ENCODE measurements at regions of chr15 and their contacts with region 1.

Region 1: GRCh38 chr15:41180206-41180789 is 50.3 kb downstream of the EXD1 start:
- DNase-seq: no peak

Region 2: GRCh38 chr15:40906091-40906990 is 274.0 kb before region 1 on chr15:
- intact Hi-C with region 1: loop called (anchors 10 kb)
- DNase-seq: peak in 40 of 42 donors; percentile 27 to 81 (median 60)

Region 3: DNA sequence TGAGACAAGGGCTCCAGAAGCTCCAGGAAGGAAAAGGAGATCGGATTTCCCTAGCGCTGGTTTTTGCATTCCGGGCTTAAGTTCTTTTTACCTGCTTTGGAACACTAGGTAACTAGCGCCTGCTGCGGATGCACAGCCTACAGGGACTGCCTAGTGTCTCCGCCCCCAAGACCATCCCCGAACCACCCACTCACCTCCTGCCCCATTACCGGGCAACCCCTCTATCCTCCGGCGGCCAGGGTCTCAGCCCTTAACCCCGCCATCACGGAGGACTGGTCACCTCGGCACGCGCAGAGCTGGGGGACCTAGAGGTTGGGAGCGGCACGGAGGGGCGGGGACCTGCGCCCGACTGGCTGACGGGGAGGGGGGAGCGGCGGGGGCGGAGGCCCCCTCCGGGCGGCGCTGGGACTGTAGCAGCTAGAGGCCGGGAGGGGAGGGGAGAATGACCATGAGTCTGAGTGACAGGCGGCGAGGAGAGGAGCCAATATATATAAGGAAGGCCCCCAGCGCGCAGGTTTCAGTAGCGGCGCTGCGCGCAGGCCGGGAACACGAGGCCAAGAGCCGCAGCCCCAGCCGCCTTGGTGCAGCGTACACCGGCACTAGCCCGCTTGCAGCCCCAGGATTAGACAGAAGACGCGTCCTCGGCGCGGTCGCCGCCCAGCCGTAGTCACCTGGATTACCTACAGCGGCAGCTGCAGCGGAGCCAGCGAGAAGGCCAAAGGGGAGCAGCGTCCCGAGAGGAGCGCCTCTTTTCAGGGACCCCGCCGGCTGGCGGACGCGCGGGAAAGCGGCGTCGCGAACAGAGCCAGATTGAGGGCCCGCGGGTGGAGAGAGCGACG is 251.3 kb before region 1 on chr15 and contains the start of gene DLL4:
- intact Hi-C with region 1: no loop called
- DNase-seq: peak in 8 of 42 donors; percentile 20 to 41 (median 27)

Region 4: GRCh38 chr15:41230650-41231533 is 50.6 kb after region 1 on chr15 and contains the starts of genes CHP1 and EXD1:
- intact Hi-C with region 1: no loop called
- DNase-seq: peak; percentile 94 to 99 (median 98)